WTC11 (cell line): ENCODE measurements at regions of chr17 and their contacts with region 1.

Region 1: GRCh38 chr17:2786176-2786881 is 9.9 kb upstream of the RAP1GAP2 start:
- DNase-seq: peak; percentile 99
- ATAC-seq: peak; percentile 97
- H3K4me3 Mint-ChIP-seq: no peak overlapping the region
- H3K27ac Mint-ChIP-seq: peak overlapping the region; percentile 45; the same call in 1 of the 2 replicates
- H3K4me1 Mint-ChIP-seq: peaks cover 4% of the 10 kb centered on the region
- H3K27me3 Mint-ChIP-seq: no peaks in the 10 kb centered on the region
- CTCF ChIP-seq: peak; percentile 81

Region 2: GRCh38 chr17:2755891-2756724 is 30.2 kb before region 1 on chr17:
- CTCF ChIA-PET with region 1: interaction called, 14 read pairs
- POLR2A ChIA-PET with region 1: no interaction called
- DNase-seq: peak; percentile 82
- ATAC-seq: peak; percentile 87
- H3K4me3 Mint-ChIP-seq: peak overlapping the region; percentile 75
- H3K27ac Mint-ChIP-seq: peak overlapping the region; percentile 91; the same call in 1 of the 2 replicates
- H3K4me1 Mint-ChIP-seq: peaks cover 17% of the 10 kb centered on the region
- H3K27me3 Mint-ChIP-seq: peaks cover 37% of the 10 kb centered on the region
- CTCF ChIP-seq: no peak

Region 3: GRCh38 chr17:2814481-2815341 is 28.4 kb after region 1 on chr17:
- CTCF ChIA-PET with region 1: interaction called, 28 read pairs
- POLR2A ChIA-PET with region 1: no interaction called
- DNase-seq: no peak
- ATAC-seq: peak; percentile 24
- H3K4me3 Mint-ChIP-seq: no peak overlapping the region
- H3K27ac Mint-ChIP-seq: no peak overlapping the region
- H3K4me1 Mint-ChIP-seq: peaks cover 7% of the 10 kb centered on the region
- H3K27me3 Mint-ChIP-seq: no peaks in the 10 kb centered on the region
- CTCF ChIP-seq: no peak

Region 4: GRCh38 chr17:2837147-2837561 is 50.8 kb after region 1 on chr17:
- CTCF ChIA-PET with region 1: interaction called, 18 read pairs
- POLR2A ChIA-PET with region 1: no interaction called
- DNase-seq: no peak
- ATAC-seq: peak; percentile 64
- H3K4me3 Mint-ChIP-seq: no peak overlapping the region
- H3K27ac Mint-ChIP-seq: no peak overlapping the region
- H3K4me1 Mint-ChIP-seq: no peaks in the 10 kb centered on the region
- H3K27me3 Mint-ChIP-seq: no peaks in the 10 kb centered on the region
- CTCF ChIP-seq: no peak

Region 5: GRCh38 chr17:2929881-2930533 is 143.7 kb after region 1 on chr17:
- CTCF ChIA-PET with region 1: interaction called, 20 read pairs
- POLR2A ChIA-PET with region 1: no interaction called
- DNase-seq: peak; percentile 89
- ATAC-seq: peak; percentile 90
- H3K4me3 Mint-ChIP-seq: no peak overlapping the region
- H3K27ac Mint-ChIP-seq: 0 out of 2 replicates have a peak overlapping the region, but pooled peaks have one; percentile 58
- H3K4me1 Mint-ChIP-seq: peaks cover 41% of the 10 kb centered on the region
- H3K27me3 Mint-ChIP-seq: no peaks in the 10 kb centered on the region
- CTCF ChIP-seq: peak; percentile 84

Region 6: DNA sequence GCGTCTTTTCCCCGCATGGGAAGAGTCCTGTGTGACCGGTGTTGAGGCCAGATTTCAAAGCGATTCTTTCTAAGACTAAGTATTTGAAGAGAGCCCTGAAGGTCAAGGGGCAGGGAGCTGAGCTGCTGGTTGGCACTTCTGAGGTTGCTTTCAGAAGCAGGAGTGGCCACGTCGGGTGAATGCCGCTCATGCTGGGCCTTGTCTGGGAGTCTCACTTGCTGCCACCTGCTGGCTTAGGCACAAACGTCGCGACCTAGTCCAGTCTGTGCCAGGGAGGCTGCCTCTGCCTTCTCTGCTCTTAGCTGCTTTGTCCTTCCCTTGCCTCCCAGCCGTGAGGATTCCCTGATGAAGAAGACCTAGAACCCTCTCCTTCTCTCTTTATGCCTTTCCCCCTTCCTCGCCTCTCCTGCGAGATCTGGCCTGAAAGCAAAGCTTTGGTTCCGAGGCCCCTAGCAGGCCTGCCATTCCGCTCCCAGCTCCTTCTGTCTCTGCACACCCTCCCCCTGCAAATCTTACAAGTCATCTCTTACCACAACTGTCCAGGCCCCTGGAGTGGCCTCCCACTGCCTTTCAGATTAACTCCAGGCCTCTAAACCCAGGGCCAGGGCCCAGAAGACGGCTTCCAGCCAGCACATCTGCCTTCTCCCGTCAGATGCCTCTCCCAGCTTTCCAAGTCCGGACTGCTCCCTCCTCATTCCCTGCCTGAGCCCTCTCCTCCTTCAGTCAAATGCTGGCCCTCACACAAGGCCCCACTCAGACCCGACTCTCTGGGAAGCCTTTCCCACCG is 861.6 kb after region 1 on chr17:
- CTCF ChIA-PET with region 1: no interaction called
- POLR2A ChIA-PET with region 1: interaction called, 10 read pairs
- DNase-seq: peak; percentile 58
- ATAC-seq: peak; percentile 93
- H3K4me3 Mint-ChIP-seq: no peak overlapping the region
- H3K27ac Mint-ChIP-seq: peak overlapping the region; percentile 17; the same call in 1 of the 2 replicates
- H3K4me1 Mint-ChIP-seq: no peaks in the 10 kb centered on the region
- H3K27me3 Mint-ChIP-seq: no peaks in the 10 kb centered on the region
- CTCF ChIP-seq: no peak